GM12878 (cell line): ENCODE measurements at regions of chr15 and their contacts with region 1.

Region 1: GRCh38 chr15:89177633-89178306 is 43.6 kb downstream of the RLBP1 start:
- DNase-seq: peak; percentile 15
- ATAC-seq: peak; percentile 76
- H3K4me3 ChIP-seq: no peak overlapping the region
- H3K27ac ChIP-seq: no peak overlapping the region
- H3K4me1 ChIP-seq: peaks cover 7% of the 10 kb centered on the region; the same call in 1 of the 2 replicates
- H3K27me3 ChIP-seq: no peaks in the 10 kb centered on the region
- CTCF ChIP-seq: peak; percentile 76 to 92 (median 87); a peak in 5 of 6 replicates
- EP300 ChIP-seq: no peak
- POLR2A ChIP-seq: no peak
- RAD21 ChIP-seq: peak; percentile 88

Region 2: GRCh38 chr15:88375234-88375927 is 802.4 kb before region 1 on chr15:
- CTCF ChIA-PET with region 1: no interaction called
- POLR2A ChIA-PET with region 1: no interaction called
- RAD21 ChIA-PET with region 1: no interaction called
- SMC1A ChIA-PET with region 1: no interaction called
- in situ Hi-C with region 1: no loop called
- intact Hi-C with region 1: no loop called
- DNase-seq: no peak
- ATAC-seq: no peak
- H3K4me3 ChIP-seq: no peak overlapping the region
- H3K27ac ChIP-seq: no peak overlapping the region
- H3K4me1 ChIP-seq: no peaks in the 10 kb centered on the region
- H3K27me3 ChIP-seq: no peaks in the 10 kb centered on the region; a peak in 1 of 4 replicates
- CTCF ChIP-seq: no peak
- EP300 ChIP-seq: no peak
- POLR2A ChIP-seq: no peak
- RAD21 ChIP-seq: no peak

Region 3: DNA sequence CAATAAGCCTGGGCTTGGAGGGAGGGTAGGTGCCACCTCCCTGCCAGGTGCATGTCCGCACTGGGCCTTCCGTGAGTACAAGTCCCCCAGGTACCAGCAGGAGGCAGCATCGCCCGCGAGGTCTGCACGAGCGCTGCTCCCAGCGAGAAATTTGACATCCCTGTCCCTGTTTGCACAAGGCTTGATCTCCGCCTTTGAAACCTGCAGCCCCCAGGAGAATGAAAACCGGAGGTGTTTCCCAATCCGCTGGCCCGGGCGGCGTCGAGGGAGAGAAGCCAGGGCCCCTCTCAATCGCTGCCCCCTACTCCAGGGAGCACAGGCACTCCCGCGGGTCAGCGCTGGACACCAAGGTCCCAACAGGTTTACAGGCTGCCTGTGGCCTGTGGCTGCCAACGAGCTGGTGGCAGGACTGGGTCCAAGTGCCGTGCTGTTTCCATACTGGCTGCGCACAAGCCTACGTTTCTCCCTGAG is 283.4 kb before region 1 on chr15:
- CTCF ChIA-PET with region 1: interaction called, 3 read pairs
- POLR2A ChIA-PET with region 1: no interaction called
- RAD21 ChIA-PET with region 1: no interaction called
- SMC1A ChIA-PET with region 1: no interaction called
- in situ Hi-C with region 1: no loop called
- intact Hi-C with region 1: loop called (anchors 2 kb)
- DNase-seq: no peak
- ATAC-seq: peak; percentile 75
- H3K4me3 ChIP-seq: peak overlapping the region; percentile 38; the same call in 1 of the 2 replicates
- H3K27ac ChIP-seq: no peak overlapping the region
- H3K4me1 ChIP-seq: peaks cover 3% of the 10 kb centered on the region
- H3K27me3 ChIP-seq: peaks cover 0 to 5% of the 10 kb centered on the region in 2 experiments; a peak in 2 of 4 replicates
- CTCF ChIP-seq: peak; percentile 73 to 92 (median 82)
- EP300 ChIP-seq: no peak
- POLR2A ChIP-seq: no peak
- RAD21 ChIP-seq: peak; percentile 48

Region 4: DNA sequence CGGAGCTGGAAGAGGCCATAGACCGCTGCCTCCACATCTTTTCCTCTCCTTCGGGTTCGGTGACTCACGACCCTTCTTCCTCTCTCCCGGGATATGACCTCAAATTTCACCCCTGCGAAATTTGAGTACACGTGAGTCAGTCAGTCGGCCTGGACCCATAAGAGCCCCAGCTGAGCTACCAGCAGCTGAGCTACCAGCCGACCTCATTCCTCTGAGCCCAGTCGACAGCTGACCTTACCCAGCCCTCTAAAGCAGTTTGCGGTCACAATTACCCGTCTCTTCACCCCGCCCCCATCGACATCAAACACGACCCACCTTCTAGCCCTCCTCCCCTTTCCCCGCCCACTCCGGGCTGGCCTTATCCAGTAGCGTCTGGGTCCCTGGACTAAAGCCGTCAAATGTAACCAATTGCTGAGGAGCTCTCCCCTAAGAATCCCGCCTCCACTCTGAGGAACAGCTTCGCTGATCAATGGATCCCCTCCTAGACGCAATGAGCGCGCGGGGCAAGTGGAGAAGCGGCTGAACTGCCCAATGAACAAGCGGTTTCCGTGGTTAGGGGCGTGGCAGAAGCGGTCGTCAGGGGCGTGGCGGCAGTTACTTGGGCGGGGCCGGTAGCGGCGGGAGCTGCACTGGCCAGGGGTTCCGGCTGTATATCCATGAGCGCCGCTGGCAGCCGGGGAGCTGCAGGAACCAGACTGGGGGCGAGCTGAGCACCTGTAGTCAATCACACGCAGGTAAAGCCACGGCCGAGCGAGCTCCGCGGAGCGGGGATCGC is 89.8 kb before region 1 on chr15 and contains the start of gene ABHD2:
- CTCF ChIA-PET with region 1: interaction called, 42 read pairs
- POLR2A ChIA-PET with region 1: interaction called, 5 read pairs
- RAD21 ChIA-PET with region 1: interaction called, 8 read pairs
- SMC1A ChIA-PET with region 1: interaction called, 7 read pairs
- in situ Hi-C with region 1: no loop called
- intact Hi-C with region 1: no loop called
- DNase-seq: peak; percentile 99
- ATAC-seq: peak; percentile 96
- H3K4me3 ChIP-seq: peak within 1 kb of the TSS; percentile 88
- H3K27ac ChIP-seq: peak within 1 kb of the TSS; percentile 56
- H3K4me1 ChIP-seq: no peaks in the 10 kb centered on the region; the same call in 1 of the 2 replicates
- H3K27me3 ChIP-seq: no peaks in the 10 kb centered on the region
- CTCF ChIP-seq: no peak
- EP300 ChIP-seq: 0 out of 4 replicates have a peak, but pooled peaks of 1 of the 2 experiments have one; percentile 28
- POLR2A ChIP-seq: peak; percentile 84
- RAD21 ChIP-seq: no peak
- polyA plus RNA-seq, gene ABHD2: 1.2 to 4.7 TPM

Region 5: DNA sequence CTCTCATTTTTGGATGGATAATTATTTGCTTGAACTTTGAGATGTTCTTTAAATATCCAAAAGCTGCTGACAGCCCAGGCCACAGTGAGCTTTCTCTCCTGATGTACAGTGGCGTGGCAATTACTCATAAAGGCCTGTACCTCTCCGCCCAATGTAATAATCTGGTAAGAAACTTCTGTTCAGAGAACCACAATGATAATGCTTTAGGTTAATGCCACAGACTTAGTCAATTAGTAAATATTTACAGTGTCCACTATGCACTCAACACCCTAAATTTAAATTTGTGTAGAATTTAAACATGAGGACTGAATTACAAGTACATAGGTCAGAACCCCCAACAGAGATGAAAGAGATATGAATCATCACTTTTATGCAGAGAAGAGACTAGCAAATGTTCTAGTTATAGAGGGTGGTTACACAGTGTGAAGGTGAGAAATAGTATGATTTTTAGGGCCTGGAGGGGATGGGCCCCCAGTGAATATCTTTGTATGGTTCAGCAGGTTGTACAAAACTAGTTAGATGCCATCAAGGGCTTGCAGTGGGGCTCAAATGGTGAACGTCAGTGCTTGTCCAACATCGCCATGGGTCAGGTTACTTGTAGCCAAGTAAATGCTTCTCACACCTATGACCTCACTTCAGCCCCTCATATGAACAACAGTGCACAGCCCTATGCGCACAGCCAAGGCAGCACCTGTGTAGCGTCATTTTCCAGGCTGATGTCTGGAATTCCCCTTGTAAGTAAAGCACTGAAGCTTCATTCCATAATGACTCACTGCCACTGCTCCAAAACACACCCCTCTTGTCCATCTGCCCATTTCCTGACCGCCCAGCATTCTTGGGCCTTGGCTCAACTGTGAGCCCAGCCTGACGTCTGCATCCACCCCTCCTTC is 76.2 kb before region 1 on chr15:
- CTCF ChIA-PET with region 1: interaction called, 11 read pairs
- POLR2A ChIA-PET with region 1: no interaction called
- RAD21 ChIA-PET with region 1: no interaction called
- SMC1A ChIA-PET with region 1: no interaction called
- in situ Hi-C with region 1: no loop called
- intact Hi-C with region 1: no loop called
- DNase-seq: no peak
- ATAC-seq: peak; percentile 81
- H3K4me3 ChIP-seq: no peak overlapping the region
- H3K27ac ChIP-seq: peak overlapping the region; percentile 10; the same call in 1 of the 2 replicates
- H3K4me1 ChIP-seq: peaks cover 9% of the 10 kb centered on the region; the same call in 1 of the 2 replicates
- H3K27me3 ChIP-seq: no peaks in the 10 kb centered on the region
- CTCF ChIP-seq: no peak
- EP300 ChIP-seq: no peak
- POLR2A ChIP-seq: no peak
- RAD21 ChIP-seq: no peak

Region 6: DNA sequence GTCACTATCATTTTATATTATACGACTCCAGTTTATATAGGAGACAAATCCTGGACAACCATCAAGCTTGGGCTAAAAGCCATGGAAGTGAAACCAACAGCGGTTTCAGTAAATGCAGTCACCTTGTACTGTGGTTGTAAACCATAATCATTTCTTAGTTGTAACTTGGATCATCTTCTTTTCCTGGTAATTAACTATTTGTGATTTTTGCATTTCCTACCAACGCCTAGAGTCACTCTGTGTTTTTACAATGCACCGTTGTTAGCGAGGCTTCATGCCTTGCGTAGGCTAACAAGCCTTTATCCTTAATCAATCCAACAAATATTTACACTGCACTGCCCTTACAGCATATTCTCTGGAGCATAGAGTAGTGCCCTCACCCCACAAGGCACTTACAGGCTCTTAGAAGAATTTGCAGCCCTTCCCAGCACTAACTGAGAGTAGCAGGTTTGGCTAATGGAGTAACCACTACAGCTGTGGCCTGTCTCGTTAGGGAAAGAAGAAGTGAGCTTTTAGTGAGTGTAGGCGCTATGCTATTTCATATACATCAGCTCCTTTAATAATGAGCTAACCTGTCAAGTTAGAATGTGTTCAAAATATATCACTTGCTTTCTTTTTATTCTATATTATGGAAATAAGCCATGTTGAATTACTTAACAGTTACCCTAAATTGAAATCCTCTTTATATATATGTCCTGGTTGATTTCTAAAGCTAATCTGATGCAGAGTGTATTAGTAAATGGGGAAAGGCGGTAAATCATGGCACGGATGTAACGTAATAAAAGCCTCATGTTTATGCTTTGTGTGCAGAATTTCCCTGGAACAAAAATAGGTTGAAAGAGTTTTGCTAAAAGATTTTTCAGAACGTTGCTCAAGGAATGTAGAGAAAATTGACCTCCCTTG is 26.8 kb before region 1 on chr15:
- CTCF ChIA-PET with region 1: interaction called, 24 read pairs
- POLR2A ChIA-PET with region 1: no interaction called
- RAD21 ChIA-PET with region 1: interaction called, 5 read pairs
- SMC1A ChIA-PET with region 1: interaction called, 6 read pairs
- in situ Hi-C with region 1: no loop called
- intact Hi-C with region 1: no loop called
- DNase-seq: no peak
- ATAC-seq: no peak
- H3K4me3 ChIP-seq: no peak overlapping the region
- H3K27ac ChIP-seq: no peak overlapping the region
- H3K4me1 ChIP-seq: no peaks in the 10 kb centered on the region
- H3K27me3 ChIP-seq: no peaks in the 10 kb centered on the region
- CTCF ChIP-seq: no peak
- EP300 ChIP-seq: no peak
- POLR2A ChIP-seq: no peak
- RAD21 ChIP-seq: no peak

Region 7: DNA sequence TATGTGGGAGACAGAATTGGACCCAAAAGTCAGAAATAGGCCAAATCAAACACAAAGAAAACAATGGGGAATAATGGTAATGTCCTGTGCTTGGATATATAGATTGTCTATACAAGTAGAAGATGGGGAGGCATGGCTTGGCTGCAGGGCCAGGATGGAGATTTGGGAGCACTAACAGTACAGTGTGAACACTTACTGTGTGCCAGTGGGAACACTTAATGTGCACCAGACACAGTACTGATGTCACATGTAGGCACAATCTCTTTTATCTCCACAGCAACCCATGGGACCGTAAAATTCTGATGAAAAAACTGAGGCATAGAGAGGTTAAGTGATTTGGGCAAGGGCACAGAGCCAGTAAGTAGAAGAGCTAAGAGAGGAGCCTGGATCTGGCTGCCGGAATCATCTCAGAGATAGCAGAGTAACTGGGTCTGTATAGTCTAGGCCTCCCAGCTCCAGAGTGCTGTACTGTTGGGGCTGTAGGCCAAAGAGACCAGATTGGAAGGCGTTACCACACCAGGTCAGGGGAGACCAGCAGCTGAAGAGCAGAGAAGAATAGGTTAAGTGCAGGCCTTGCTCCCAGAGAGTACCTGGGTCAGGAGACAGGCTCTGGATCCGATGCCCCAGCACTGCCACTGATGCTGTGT is 19.7 kb before region 1 on chr15:
- CTCF ChIA-PET with region 1: interaction called, 24 read pairs
- POLR2A ChIA-PET with region 1: no interaction called
- RAD21 ChIA-PET with region 1: no interaction called
- SMC1A ChIA-PET with region 1: interaction called, 10 read pairs
- in situ Hi-C with region 1: no loop called
- intact Hi-C with region 1: no loop called
- DNase-seq: no peak
- ATAC-seq: no peak
- H3K4me3 ChIP-seq: no peak overlapping the region
- H3K27ac ChIP-seq: no peak overlapping the region
- H3K4me1 ChIP-seq: no peaks in the 10 kb centered on the region
- H3K27me3 ChIP-seq: no peaks in the 10 kb centered on the region
- CTCF ChIP-seq: no peak
- EP300 ChIP-seq: no peak
- POLR2A ChIP-seq: no peak
- RAD21 ChIP-seq: no peak

Region 8: GRCh38 chr15:89164712-89165211 is 13.0 kb before region 1 on chr15:
- CTCF ChIA-PET with region 1: interaction called, 71 read pairs
- POLR2A ChIA-PET with region 1: interaction called, 5 read pairs
- RAD21 ChIA-PET with region 1: interaction called, 9 read pairs
- SMC1A ChIA-PET with region 1: interaction called, 42 read pairs
- in situ Hi-C with region 1: no loop called
- intact Hi-C with region 1: no loop called
- DNase-seq: no peak
- ATAC-seq: no peak
- H3K4me3 ChIP-seq: no peak overlapping the region
- H3K27ac ChIP-seq: no peak overlapping the region
- H3K4me1 ChIP-seq: peaks cover 18% of the 10 kb centered on the region
- H3K27me3 ChIP-seq: no peaks in the 10 kb centered on the region
- CTCF ChIP-seq: no peak
- EP300 ChIP-seq: no peak
- POLR2A ChIP-seq: no peak
- RAD21 ChIP-seq: no peak